Esophagus muscularis mucosa (tissue), 4 donors: ENCODE measurements at regions of chr1 and their contacts with region 1.

Region 1: GRCh38 chr1:151594143-151594625 is 17.7 kb upstream of the SNX27 start:
- DNase-seq: no peak
- H3K4me3 ChIP-seq: peak overlapping the region in 2 of 4 donors; percentile 18 to 27
- H3K27ac ChIP-seq: no peak overlapping the region
- H3K4me1 ChIP-seq: peaks cover 0 to 12% (median 8%) of the 10 kb centered on the region in 4 donors
- H3K27me3 ChIP-seq: no peaks in the 10 kb centered on the region
- CTCF ChIP-seq: peak; percentile 88 to 95 (median 89)
- EP300 ChIP-seq: no peak
- POLR2A ChIP-seq: no peak

Region 2: GRCh38 chr1:151680812-151681211 is 86.6 kb after region 1 on chr1:
- intact Hi-C with region 1: loop called (anchors 10 kb)
- DNase-seq: no peak
- H3K4me3 ChIP-seq: no peak overlapping the region
- H3K27ac ChIP-seq: peak overlapping the region; percentile 50 to 76 (median 64)
- H3K4me1 ChIP-seq: peaks cover 7 to 22% (median 16%) of the 10 kb centered on the region in 4 donors
- H3K27me3 ChIP-seq: no peaks in the 10 kb centered on the region
- CTCF ChIP-seq: no peak
- EP300 ChIP-seq: no peak
- POLR2A ChIP-seq: no peak